ENCODE measurements at regions of chr9 and their contacts with region 1.

Region 1: DNA sequence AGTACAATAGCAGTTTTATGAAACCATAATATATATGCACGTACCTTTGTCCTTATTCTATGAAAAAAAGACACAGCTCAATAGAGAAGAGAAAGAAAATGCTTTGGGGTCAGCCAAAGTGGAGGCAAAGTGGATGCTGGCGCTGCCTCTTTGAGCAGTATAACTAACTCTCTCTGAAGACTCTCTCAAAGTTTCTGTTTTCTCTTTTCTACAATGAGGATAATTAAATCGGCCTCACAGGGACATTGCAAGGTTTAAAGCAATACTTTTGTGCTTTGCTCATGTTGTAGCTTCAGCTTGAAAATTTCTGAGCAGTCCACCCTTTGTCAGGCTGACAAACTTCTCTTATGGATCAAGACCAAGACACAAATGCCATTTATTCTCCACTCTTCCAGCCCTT is 455.1 kb upstream of the MPDZ start:
- DNase-seq: no peak
- H3K4me3 ChIP-seq: no peak overlapping the region
- H3K27ac ChIP-seq: no peak overlapping the region
- H3K4me1 ChIP-seq: no peaks in the 10 kb centered on the region
- H3K27me3 ChIP-seq: peaks cover 5% of the 10 kb centered on the region
- CTCF ChIP-seq: no peak

Region 2: GRCh38 chr9:14372437-14373335 is 638.1 kb after region 1 on chr9:
- CTCF ChIA-PET with region 1: interaction called, 13 read pairs
- POLR2A ChIA-PET with region 1: no interaction called
- intact Hi-C with region 1: no loop called
- DNase-seq: peak; percentile 45
- H3K4me3 ChIP-seq: no peak overlapping the region
- H3K27ac ChIP-seq: no peak overlapping the region
- H3K4me1 ChIP-seq: peaks cover 18% of the 10 kb centered on the region
- H3K27me3 ChIP-seq: no peaks in the 10 kb centered on the region
- CTCF ChIP-seq: no peak

Measured in A673 (cell line).